Aorta (tissue), 5 donors: ENCODE measurements at regions of chr11 and their contacts with region 1.

Region 1: GRCh38 chr11:250740-251299 is 14.0 kb downstream of the PSMD13 start:
- DNase-seq: peak; percentile 77 to 85
- ATAC-seq: peak; percentile 69
- H3K4me3 ChIP-seq: no peak overlapping the region
- H3K27ac ChIP-seq: peak overlapping the region in 1 of 2 donors; percentile 13
- H3K4me1 ChIP-seq: no peaks in the 10 kb centered on the region
- H3K27me3 ChIP-seq: no peaks in the 10 kb centered on the region

Region 2: GRCh38 chr11:288328-289144 is 37.7 kb after region 1 on chr11 and contains the start of gene PGGHG:
- intact Hi-C with region 1: loop called in 1 of 2 experiments (anchors 5 kb)
- DNase-seq: peak; percentile 87 to 93
- ATAC-seq: peak; percentile 77
- H3K4me3 ChIP-seq: peak within 1 kb of the TSS; percentile 51 to 69
- H3K27ac ChIP-seq: no peak within 1 kb of the TSS
- H3K4me1 ChIP-seq: no peaks in the 10 kb centered on the region
- H3K27me3 ChIP-seq: no peaks in the 10 kb centered on the region
- total RNA-seq, gene PGGHG: 42.1 to 61.6 TPM

Region 3: GRCh38 chr11:362614-363465 is 112.0 kb after region 1 on chr11:
- intact Hi-C with region 1: loop called in 1 of 2 experiments (anchors 1 kb)
- DNase-seq: peak in 1 of 2 donors; percentile 68
- ATAC-seq: no peak
- H3K4me3 ChIP-seq: no peak overlapping the region
- H3K27ac ChIP-seq: no peak overlapping the region
- H3K4me1 ChIP-seq: no peaks in the 10 kb centered on the region
- H3K27me3 ChIP-seq: no peaks in the 10 kb centered on the region

Region 4: DNA sequence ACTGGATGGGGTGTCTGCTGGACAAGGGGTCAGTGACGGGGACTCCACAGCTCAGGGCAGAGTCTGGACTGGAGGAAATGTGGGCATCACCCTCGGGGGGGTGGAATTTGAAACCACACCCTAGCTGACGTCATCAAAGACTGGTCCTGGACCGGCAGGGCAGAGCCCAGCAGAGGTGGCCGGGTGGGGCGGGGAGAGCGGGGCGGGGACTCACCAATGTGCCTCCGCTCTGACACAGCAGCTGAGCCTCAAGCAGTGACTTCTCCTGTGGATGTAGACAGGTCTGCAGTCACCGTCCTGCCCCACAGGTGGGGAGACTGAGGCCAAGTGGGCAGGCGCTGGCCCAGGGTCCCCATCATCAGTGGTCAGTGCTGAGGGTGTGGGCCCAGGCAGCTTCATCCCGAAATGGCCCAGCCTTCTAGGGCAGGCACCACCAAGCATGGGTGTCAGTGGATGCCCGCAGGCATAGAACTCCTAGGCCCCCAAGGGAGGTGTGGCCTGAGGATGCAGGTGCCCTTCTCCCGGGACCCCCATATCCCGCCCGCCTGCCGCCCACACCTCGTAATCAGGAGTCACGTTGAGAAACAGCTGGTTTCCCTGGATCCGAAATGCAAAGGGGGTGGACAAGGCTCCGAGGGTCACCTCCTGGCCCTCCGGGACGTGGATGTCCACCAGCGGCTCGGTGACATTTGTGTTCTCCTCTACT is 373.3 kb after region 1 on chr11:
- intact Hi-C with region 1: no loop called
- DNase-seq: no peak
- ATAC-seq: no peak
- H3K4me3 ChIP-seq: no peak overlapping the region
- H3K27ac ChIP-seq: no peak overlapping the region
- H3K4me1 ChIP-seq: no peaks in the 10 kb centered on the region
- H3K27me3 ChIP-seq: no peaks in the 10 kb centered on the region

Region 5: GRCh38 chr11:762421-763072 is 511.7 kb after region 1 on chr11:
- intact Hi-C with region 1: no loop called
- DNase-seq: peak in 1 of 2 donors; percentile 72
- ATAC-seq: no peak
- H3K4me3 ChIP-seq: no peak overlapping the region
- H3K27ac ChIP-seq: no peak overlapping the region
- H3K4me1 ChIP-seq: no peaks in the 10 kb centered on the region
- H3K27me3 ChIP-seq: no peaks in the 10 kb centered on the region